Activated T-helper 1 cell treated with anti-CD3 and anti-CD28 coated beads, Interleukin-12 subunit alpha, Interleukin-12 subunit beta, Interleukin-2, Interleukin-4 antibody, amounts not matched to agents 30 ng/mL and 10 ng/mL and 1 ng/mL, durations not matched to agents 14 hours and 24 hours and 36 hours (primary cell): ENCODE measurements at regions of chr20 and their contacts with region 1.

Region 1: DNA sequence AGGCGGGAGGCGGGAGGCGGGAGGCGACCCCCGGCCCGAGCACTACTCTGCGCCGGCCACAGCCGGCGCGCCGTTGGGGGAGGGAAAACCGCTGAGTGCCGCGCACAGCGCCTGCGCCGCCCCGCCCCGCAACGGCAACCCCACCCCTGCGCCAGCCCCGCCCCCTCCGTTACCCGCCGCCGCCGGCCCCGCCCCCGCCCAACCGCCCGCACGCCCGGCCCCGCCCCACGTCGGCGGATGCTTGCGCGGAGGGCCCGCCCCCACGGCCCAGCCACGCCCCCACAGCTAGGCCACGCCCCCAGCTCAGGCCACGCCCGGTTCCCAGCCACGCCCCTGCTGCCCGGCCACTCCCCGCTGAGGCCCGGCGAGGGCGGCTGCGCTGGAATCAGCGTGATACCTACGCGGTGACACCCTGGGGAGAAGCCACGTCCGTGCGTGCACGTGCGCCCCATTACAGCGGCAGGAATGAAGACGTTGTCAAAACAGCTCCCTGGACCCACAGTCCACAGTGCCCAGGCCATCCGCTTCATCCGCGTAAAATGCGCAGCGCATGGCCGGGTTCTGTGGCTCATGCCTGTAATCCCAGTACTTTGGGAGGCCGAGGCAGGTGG is at the start of gene TCFL5:
- DNase-seq: peak; percentile 91
- H3K4me3 Mint-ChIP-seq: peak within 1 kb of the TSS; percentile 68
- H3K27ac Mint-ChIP-seq: peak within 1 kb of the TSS; percentile 34
- H3K4me1 Mint-ChIP-seq: peaks cover 6% of the 10 kb centered on the region
- H3K27me3 Mint-ChIP-seq: peaks cover 27% of the 10 kb centered on the region
- total RNA-seq, gene TCFL5: 5.7 and 5.8 TPM in 2 replicates

Region 2: DNA sequence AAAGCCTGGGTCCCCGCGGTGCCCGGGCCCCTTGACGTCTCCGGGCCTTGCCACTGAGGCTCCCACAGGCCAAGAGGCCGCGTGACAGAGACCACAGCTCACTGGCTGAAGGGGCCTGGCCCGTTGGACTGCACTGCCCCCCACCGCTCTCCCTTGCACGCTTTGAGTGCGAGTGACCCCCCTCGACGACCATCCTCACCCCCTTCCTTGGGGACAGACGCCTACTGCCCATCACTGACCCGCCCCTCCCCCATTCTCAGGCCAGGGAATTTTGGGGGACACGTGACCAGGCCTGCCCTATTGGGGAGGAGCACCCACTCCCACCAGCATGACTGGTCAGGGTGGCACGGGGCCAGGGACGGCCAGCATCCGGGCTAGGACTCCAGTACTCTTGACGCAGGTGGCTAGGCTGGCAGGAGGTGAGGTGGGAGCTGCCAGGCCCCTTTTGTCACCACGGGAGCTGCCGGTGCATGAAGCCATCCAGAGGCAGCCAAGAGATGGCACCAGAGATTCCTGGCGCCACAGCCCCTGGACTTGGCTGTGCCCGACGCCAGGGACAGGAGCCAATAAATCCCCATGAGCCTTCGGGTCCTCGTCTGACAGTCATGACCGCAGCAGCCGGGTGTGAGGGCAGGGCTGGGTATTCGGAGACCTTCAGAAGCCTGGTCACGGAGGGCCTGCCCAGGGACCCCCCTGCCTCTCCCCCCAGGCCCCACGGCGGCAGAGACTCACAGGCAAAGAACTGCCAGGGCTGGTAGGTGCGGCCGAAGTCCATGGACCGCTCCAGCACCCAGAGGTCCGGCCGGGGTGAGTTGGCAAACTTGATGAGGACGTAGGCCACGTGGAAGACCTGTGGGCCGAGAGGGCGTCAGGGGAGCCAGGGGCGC is 509.2 kb before region 1 on chr20:
- intact Hi-C with region 1: no loop called
- DNase-seq: no peak
- H3K4me3 Mint-ChIP-seq: no peak overlapping the region
- H3K27ac Mint-ChIP-seq: no peak overlapping the region
- H3K4me1 Mint-ChIP-seq: no peaks in the 10 kb centered on the region
- H3K27me3 Mint-ChIP-seq: peaks cover 2% of the 10 kb centered on the region

Region 3: GRCh38 chr20:62407221-62407992 is 454.4 kb before region 1 on chr20 and contains the start of gene CABLES2:
- intact Hi-C with region 1: loop called (anchors 5 kb)
- DNase-seq: peak; percentile 90
- H3K4me3 Mint-ChIP-seq: peak within 1 kb of the TSS; percentile 85
- H3K27ac Mint-ChIP-seq: peak within 1 kb of the TSS; percentile 87
- H3K4me1 Mint-ChIP-seq: peaks cover 10% of the 10 kb centered on the region
- H3K27me3 Mint-ChIP-seq: no peaks in the 10 kb centered on the region
- total RNA-seq, gene CABLES2: 12.9 and 15.7 TPM in 2 replicates